ENCODE measurements at regions of chr15 and their contacts with region 1.

Region 1: GRCh38 chr15:33292717-33293307 is 18.0 kb upstream of the RYR3 start:
- DNase-seq: no peak
- ATAC-seq: no peak
- H3K4me3 Mint-ChIP-seq: no peak overlapping the region
- H3K27ac Mint-ChIP-seq: no peak overlapping the region
- H3K4me1 Mint-ChIP-seq: no peaks in the 10 kb centered on the region
- H3K27me3 Mint-ChIP-seq: peaks cover 5% of the 10 kb centered on the region
- CTCF ChIP-seq: no peak

Region 2: GRCh38 chr15:33086507-33087121 is 206.2 kb before region 1 on chr15:
- CTCF ChIA-PET with region 1: interaction called, 8 read pairs
- POLR2A ChIA-PET with region 1: no interaction called
- intact Hi-C with region 1: loop called (anchors 5 kb)
- DNase-seq: no peak
- ATAC-seq: no peak
- H3K4me3 Mint-ChIP-seq: no peak overlapping the region
- H3K27ac Mint-ChIP-seq: no peak overlapping the region
- H3K4me1 Mint-ChIP-seq: no peaks in the 10 kb centered on the region
- H3K27me3 Mint-ChIP-seq: no peaks in the 10 kb centered on the region
- CTCF ChIP-seq: no peak

Region 3: GRCh38 chr15:33737687-33738601 is 445.1 kb after region 1 on chr15:
- CTCF ChIA-PET with region 1: interaction called, 5 read pairs
- POLR2A ChIA-PET with region 1: no interaction called
- intact Hi-C with region 1: loop called (anchors 10 kb)
- DNase-seq: no peak
- ATAC-seq: no peak
- H3K4me3 Mint-ChIP-seq: no peak overlapping the region
- H3K27ac Mint-ChIP-seq: no peak overlapping the region
- H3K4me1 Mint-ChIP-seq: peaks cover 3% of the 10 kb centered on the region
- H3K27me3 Mint-ChIP-seq: no peaks in the 10 kb centered on the region
- CTCF ChIP-seq: no peak

Region 4: GRCh38 chr15:33963831-33964664 is 671.2 kb after region 1 on chr15:
- CTCF ChIA-PET with region 1: no interaction called
- POLR2A ChIA-PET with region 1: no interaction called
- intact Hi-C with region 1: loop called (anchors 2 kb)
- DNase-seq: no peak
- ATAC-seq: no peak
- H3K4me3 Mint-ChIP-seq: no peak overlapping the region
- H3K27ac Mint-ChIP-seq: no peak overlapping the region
- H3K4me1 Mint-ChIP-seq: no peaks in the 10 kb centered on the region
- H3K27me3 Mint-ChIP-seq: no peaks in the 10 kb centered on the region
- CTCF ChIP-seq: no peak

Measured in activated B cell treated with CpG ODN at 0.5 μM for 24 hours (primary cell).